ENCODE measurements at regions of chr10 and their contacts with region 1.

Region 1: GRCh38 chr10:131453594-131454355 is 142.3 kb upstream of the TCERG1L start:
- DNase-seq: peak in 8 of 9 donors; percentile 25 to 73 (median 36)
- ATAC-seq: peak; percentile 53
- H3K4me3 ChIP-seq: no peak overlapping the region
- H3K4me3 Mint-ChIP-seq: peak overlapping the region in 9 of 10 donors; percentile 35 to 81 (median 65)
- H3K27ac ChIP-seq: no peak overlapping the region
- H3K27ac Mint-ChIP-seq: no peak overlapping the region
- H3K4me1 ChIP-seq: no peaks in the 10 kb centered on the region
- H3K4me1 Mint-ChIP-seq: peaks cover 0 to 14% (median 4%) of the 10 kb centered on the region in 7 donors
- H3K27me3 ChIP-seq: no peaks in the 10 kb centered on the region
- H3K27me3 Mint-ChIP-seq: peaks cover 14 to 46% (median 18%) of the 10 kb centered on the region in 5 donors

Region 2: DNA sequence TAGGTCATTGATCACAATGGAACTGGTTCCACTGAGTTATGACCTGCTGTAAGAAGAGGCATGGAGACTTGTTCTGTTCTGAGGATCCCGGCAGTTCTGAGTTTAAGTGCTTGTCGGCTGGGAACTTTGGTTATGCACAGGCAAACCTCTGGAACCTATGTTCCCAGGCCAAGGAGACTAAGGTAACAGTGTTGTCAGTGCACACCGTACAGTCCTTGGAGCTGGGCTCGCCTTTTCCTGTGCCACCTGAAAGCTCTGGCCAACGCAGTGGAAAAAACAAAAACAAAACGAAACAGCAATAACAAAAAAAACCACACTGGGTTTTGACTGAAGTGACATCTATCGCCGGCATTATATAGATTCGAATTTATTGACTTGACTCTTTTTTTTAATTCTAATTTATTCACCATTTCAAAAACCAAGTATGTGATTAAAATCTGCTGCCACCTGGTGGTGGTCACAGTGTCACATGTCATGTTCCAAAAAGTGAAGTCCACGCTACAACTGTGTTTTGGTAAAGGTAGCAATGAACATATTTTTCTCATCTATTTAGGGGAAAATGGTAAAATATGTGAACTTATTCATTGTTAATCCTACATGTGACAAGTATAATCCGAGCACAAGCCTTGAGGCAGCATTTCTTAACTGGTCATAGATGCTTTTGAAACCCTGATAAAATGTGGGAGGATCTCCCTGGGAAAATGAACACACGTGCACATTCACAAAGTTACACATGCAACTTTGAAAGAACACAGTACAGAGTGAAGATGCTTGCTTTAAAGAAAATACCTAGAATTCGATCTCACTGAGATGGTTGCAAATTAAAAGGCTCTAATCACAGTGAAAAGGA is 333.2 kb after region 1 on chr10:
- CTCF ChIA-PET with region 1: no interaction called
- POLR2A ChIA-PET with region 1: no interaction called
- intact Hi-C with region 1: loop called in 1 of 2 experiments (anchors 5 kb)
- DNase-seq: peak in 5 of 9 donors; percentile 13 to 25 (median 17)
- ATAC-seq: no peak
- H3K4me3 ChIP-seq: no peak overlapping the region
- H3K4me3 Mint-ChIP-seq: no peak overlapping the region
- H3K27ac ChIP-seq: no peak overlapping the region
- H3K27ac Mint-ChIP-seq: peak overlapping the region in 1 of 9 donors; percentile 25
- H3K4me1 ChIP-seq: no peaks in the 10 kb centered on the region
- H3K4me1 Mint-ChIP-seq: no peaks in the 10 kb centered on the region
- H3K27me3 ChIP-seq: no peaks in the 10 kb centered on the region
- H3K27me3 Mint-ChIP-seq: peaks cover 0 to 25% (median 13%) of the 10 kb centered on the region in 5 donors

Region 3: DNA sequence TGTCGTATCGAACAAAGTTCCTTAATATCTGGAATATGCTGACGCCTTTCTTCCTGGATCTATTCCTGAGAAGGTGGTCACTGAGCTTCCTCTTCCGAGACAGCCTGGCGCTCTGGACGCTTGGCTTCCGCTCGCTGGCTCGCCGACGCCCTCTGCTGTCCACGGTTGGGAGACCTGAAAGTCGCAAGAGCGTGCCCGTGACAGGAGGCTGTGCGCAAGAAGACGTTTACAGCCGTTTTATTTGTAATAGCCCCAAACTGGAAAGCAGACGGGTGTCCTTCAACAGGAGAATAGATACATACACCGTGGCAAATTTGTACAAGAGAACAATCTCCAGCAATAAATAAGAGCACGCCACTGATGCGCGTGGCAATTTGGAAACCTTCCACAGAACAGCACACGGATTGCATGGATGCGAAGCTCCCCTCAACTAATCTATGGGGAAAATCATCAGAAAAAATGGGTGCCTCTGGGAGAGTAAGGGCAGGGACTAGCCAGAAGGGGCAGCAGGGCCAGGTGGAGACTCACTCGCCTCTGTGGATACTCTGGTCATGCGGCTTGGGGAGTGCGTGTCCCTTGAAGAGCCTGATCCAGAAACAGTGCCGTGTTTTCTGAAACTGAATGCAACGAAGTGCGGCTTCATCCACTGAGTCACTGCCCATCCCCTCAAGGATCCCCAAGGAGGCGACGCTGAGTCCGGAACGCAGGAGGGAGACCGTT is 569.5 kb after region 1 on chr10:
- CTCF ChIA-PET with region 1: interaction called, 3 read pairs
- POLR2A ChIA-PET with region 1: no interaction called
- intact Hi-C with region 1: loop called in 1 of 2 experiments (anchors 10 kb)
- DNase-seq: peak; percentile 47 to 79 (median 70)
- ATAC-seq: peak; percentile 86
- H3K4me3 ChIP-seq: no peak overlapping the region
- H3K4me3 Mint-ChIP-seq: peak overlapping the region; percentile 14 to 75 (median 66)
- H3K27ac ChIP-seq: no peak overlapping the region
- H3K27ac Mint-ChIP-seq: peak overlapping the region in 3 of 9 donors; percentile 3 to 52 (median 8)
- H3K4me1 ChIP-seq: peaks cover 0 to 6% of the 10 kb centered on the region in 2 donors
- H3K4me1 Mint-ChIP-seq: peaks cover 5 to 16% (median 7%) of the 10 kb centered on the region in 7 donors
- H3K27me3 ChIP-seq: no peaks in the 10 kb centered on the region
- H3K27me3 Mint-ChIP-seq: peaks cover 31 to 49% (median 36%) of the 10 kb centered on the region in 5 donors